AG04450 (cell line): ENCODE measurements at regions of chr11 and their contacts with region 1.

Region 1: DNA sequence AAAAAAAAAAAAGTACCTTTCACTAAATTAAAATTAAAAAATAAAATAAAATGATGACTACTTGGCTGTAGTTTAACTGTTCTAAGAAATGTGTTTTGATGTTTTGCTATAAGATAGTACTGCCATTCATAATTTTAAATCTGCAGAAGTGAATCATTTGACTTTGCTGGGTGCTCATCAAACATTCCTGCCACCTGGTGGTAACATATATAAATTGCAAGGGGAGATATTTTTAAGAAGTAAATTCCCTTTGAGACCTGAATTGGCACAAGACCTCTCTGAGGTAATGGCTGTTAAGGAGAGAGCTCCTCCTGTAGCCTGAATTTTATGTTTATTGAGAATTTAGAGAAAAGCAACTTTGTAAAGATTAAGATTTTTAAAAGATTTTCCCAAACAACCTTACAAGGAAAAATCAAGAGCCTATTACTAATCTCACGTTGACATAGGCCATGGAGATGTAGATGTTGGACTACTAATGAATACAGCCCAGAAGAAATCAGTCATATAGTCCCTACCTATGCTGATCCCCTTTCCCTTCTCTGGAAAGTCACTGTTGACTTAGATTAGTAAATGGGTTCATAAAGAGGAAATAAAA is 11.9 kb upstream of the NARS2 start:
- DNase-seq: no peak
- H3K4me3 ChIP-seq: no peak overlapping the region
- H3K27ac ChIP-seq: no peak overlapping the region
- H3K27me3 ChIP-seq: no peaks in the 10 kb centered on the region
- CTCF ChIP-seq: peak; percentile 55

Region 2: DNA sequence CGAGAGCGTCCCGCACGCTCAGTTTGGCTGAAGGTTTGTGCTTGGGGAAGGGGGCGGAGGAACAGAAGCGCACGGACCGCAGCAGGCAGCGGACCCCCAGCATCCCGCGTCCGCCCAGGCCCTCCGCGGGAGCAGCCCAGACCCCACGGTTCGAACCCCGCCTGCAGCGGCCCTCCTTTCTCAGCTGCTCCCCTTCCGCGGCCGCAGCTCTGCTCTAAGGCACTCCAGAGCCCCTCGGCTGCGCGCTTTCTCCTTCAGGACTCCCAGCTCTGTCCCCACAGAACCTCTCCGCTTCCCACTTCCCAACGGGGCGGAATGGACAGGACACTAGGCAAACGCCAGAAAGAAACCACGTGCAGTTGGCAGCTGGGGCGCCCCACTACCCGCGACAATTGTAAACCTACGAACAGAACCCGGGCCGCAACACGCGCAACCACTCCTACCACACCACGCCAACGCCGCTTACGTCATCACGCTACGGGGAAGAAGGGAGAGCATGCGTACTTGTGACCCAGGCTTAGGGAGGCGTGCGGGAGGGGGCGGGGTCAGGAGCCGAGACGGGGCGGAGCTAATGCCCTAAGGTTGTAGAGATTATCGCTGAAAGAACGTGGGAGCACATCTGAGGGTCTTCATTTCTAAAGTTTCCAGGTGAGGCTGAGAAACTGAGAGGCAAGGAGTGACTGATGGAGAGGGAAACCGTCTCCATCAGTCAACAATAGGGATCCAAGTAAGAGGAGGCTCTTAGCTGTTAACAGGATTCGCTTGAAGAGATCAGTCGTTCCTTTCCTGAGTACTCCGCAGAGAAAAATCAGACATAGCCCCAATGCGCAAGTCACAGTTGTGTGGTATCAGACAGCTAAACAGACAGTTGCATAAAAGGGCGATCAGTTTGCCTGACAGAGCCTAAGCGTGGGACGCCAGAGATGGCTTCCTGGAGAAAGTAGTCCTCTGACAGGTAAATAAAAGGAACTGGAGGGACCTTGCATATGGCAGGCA is 11.9 kb before region 1 on chr11 and contains the start of gene NARS2:
- CTCF ChIA-PET with region 1: interaction called, 13 read pairs
- POLR2A ChIA-PET with region 1: interaction called, 4 read pairs
- DNase-seq: peak; percentile 84
- H3K4me3 ChIP-seq: peak within 1 kb of the TSS; percentile 87
- H3K27ac ChIP-seq: peak within 1 kb of the TSS; percentile 88
- H3K27me3 ChIP-seq: peaks cover 3% of the 10 kb centered on the region
- CTCF ChIP-seq: no peak
- polyA plus RNA-seq, gene NARS2: 10.6 and 18.4 TPM in 2 replicates